H1 (cell line): ENCODE measurements at regions of chr9 and their contacts with region 1.

Region 1: DNA sequence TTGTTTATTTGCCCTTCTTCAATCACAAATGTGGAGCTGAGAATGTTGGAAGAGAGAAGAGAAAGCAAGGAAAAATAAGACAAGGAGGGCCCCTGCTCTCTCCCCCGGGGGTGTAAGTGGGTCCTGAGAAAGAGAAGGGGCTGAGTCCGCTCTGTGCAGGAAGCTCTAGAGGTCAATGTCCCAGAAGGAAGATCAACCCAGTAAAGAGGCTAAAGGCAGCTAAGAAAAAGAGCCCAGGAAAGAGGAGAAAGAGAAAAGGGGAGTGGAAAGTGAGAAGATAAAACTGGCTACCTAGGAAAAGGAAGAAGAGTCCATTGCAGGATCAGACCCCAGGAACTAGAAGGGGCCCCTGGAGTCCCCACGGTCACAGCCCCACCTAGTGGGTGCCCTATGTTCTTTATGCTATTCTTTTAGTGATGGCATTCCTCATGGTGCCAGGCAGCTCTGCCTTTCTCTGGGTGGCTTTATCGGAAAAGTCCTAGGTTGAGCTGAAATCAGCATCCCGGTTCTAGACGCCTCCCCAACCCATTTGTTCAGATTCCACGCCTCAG is 583.4 kb downstream of the ACTL7B start:
- DNase-seq: peak in 1 of 2 experiments; percentile 55
- H3K4me3 ChIP-seq: no peak overlapping the region
- H3K27ac ChIP-seq: no peak overlapping the region
- H3K4me1 ChIP-seq: peaks cover 5 to 12% (median 7%) of the 10 kb centered on the region in 4 experiments; a peak in 5 of 7 replicates
- H3K27me3 ChIP-seq: no peaks in the 10 kb centered on the region
- CTCF ChIP-seq: peak; percentile 37 to 58 (median 44)
- EP300 ChIP-seq: no peak
- POLR2A ChIP-seq: no peak
- RAD21 ChIP-seq: peak; percentile 75 to 81

Region 2: DNA sequence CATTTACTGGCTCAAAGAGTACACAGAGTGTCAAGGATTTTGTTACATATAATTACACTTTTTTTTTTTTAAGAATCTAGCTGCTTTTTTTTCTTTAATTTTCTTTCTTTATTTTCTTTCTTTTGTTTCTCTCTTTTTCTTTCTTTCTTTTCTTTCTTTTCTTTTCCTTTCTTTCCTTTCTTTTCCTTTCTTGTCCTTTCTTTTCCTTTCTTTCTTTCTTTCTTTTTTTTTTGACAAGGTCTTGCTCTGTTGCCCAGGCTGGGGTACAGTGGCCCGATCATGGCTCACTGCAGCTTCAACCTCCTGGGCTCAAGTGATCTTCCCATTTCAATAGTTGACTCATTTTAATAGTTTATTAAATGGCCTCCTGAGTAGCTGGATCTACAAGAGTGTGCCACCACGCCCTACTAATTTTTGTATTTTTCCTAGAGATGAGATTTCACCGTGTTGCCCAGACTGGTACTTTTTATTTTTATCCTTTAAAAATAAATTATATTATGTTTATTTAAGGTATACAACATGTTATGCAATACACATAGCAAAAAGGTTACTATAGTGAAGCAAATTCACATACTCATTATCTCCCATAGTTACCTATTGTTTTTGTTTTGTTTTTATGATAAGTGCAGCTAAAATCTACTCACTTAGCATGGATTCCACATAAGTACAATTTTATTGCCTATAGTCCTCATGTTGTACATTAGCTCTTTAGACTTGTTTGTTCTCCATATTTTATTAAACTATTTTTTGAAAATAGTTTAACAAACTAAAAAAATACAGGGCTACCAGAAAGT is 401.3 kb before region 1 on chr9:
- CTCF ChIA-PET with region 1: interaction called, 11 read pairs
- POLR2A ChIA-PET with region 1: interaction called, 4 read pairs
- DNase-seq: no peak
- H3K4me3 ChIP-seq: no peak overlapping the region
- H3K27ac ChIP-seq: no peak overlapping the region
- H3K4me1 ChIP-seq: peaks cover 4 to 7% (median 5%) of the 10 kb centered on the region in 4 experiments; a peak in 6 of 7 replicates
- H3K27me3 ChIP-seq: no peaks in the 10 kb centered on the region
- CTCF ChIP-seq: no peak
- EP300 ChIP-seq: no peak
- POLR2A ChIP-seq: no peak
- RAD21 ChIP-seq: no peak

Region 3: GRCh38 chr9:108282872-108283271 is 10.4 kb after region 1 on chr9:
- CTCF ChIA-PET with region 1: interaction called, 13 read pairs
- POLR2A ChIA-PET with region 1: no interaction called
- DNase-seq: no peak
- H3K4me3 ChIP-seq: no peak overlapping the region
- H3K27ac ChIP-seq: no peak overlapping the region
- H3K4me1 ChIP-seq: no peaks in the 10 kb centered on the region
- H3K27me3 ChIP-seq: no peaks in the 10 kb centered on the region
- CTCF ChIP-seq: peak in 2 of 3 experiments; percentile 24 to 49; a peak in 2 of 4 replicates
- EP300 ChIP-seq: no peak
- POLR2A ChIP-seq: no peak
- RAD21 ChIP-seq: peak; percentile 34 to 43